Calu3 (cell line): ENCODE measurements at regions of chr18 and their contacts with region 1.

Region 1: GRCh38 chr18:9102508-9103375 is at the start of gene NDUFV2:
- DNase-seq: peak; percentile 99
- H3K4me3 Mint-ChIP-seq: peak within 1 kb of the TSS; percentile 79
- H3K27ac Mint-ChIP-seq: peak within 1 kb of the TSS; percentile 90
- H3K4me1 Mint-ChIP-seq: peaks cover 34% of the 10 kb centered on the region
- H3K27me3 Mint-ChIP-seq: no peaks in the 10 kb centered on the region
- CTCF ChIP-seq: no peak
- total RNA-seq, gene NDUFV2: 199 TPM in 2 replicates

Region 2: DNA sequence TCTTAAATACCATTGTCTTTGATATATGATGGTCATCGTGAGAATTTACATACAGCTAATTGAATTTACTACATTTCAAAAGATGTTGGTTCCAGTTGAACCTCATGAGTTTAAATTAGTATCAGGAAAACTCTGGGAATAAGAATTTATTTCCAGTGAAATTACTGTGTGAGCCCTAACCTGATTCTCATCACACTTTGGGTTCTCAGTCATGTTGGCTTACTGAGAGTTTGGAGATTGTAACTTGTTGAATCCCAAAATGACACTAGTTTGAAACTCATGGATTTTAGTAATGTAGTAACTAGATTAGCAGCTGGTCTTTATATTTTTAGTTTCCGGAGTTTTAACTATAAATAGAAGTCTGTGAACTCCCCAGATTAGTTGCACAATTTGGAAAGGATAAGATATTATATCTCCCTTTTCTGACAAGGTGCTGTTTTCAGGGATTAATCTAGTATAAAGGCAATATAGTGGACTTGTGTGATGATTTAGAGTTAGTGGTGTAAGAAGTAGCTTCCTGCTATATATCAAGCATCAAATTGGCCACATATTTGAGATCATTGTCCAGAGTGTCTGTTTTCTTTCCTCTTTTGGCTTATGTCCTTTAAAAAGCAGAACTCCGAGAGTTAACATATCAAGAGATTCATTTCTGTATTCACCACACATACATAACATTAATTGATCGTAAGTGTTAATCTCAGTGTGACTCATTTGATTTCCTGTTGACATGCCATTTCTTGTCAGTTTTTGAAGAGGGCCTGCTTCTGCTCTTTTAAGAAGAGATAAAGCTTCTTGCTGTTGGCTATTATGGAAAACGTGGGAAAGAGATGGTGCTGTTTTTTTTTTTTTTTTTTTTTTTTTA is 15.5 kb after region 1 on chr18:
- CTCF ChIA-PET with region 1: interaction called, 9 read pairs
- intact Hi-C with region 1: loop called (anchors 2 kb)
- DNase-seq: no peak
- H3K4me3 Mint-ChIP-seq: peak overlapping the region; percentile 46
- H3K27ac Mint-ChIP-seq: peak overlapping the region; percentile 72
- H3K4me1 Mint-ChIP-seq: peaks cover 40% of the 10 kb centered on the region
- H3K27me3 Mint-ChIP-seq: no peaks in the 10 kb centered on the region
- CTCF ChIP-seq: no peak

Region 3: GRCh38 chr18:9136315-9137155 is 33.8 kb after region 1 on chr18 and contains the start of gene ANKRD12:
- CTCF ChIA-PET with region 1: interaction called, 4 read pairs
- intact Hi-C with region 1: loop called (anchors 2 kb)
- DNase-seq: peak; percentile 97
- H3K4me3 Mint-ChIP-seq: peak within 1 kb of the TSS; percentile 94
- H3K27ac Mint-ChIP-seq: peak within 1 kb of the TSS; percentile 96
- H3K4me1 Mint-ChIP-seq: peaks cover 54% of the 10 kb centered on the region
- H3K27me3 Mint-ChIP-seq: no peaks in the 10 kb centered on the region
- CTCF ChIP-seq: no peak
- total RNA-seq, gene ANKRD12: 36.3 and 40.7 TPM in 2 replicates

Region 4: GRCh38 chr18:9243029-9243428 is 140.3 kb after region 1 on chr18:
- CTCF ChIA-PET with region 1: no interaction called
- intact Hi-C with region 1: no loop called
- DNase-seq: no peak
- H3K4me3 Mint-ChIP-seq: no peak overlapping the region
- H3K27ac Mint-ChIP-seq: no peak overlapping the region
- H3K4me1 Mint-ChIP-seq: no peaks in the 10 kb centered on the region
- H3K27me3 Mint-ChIP-seq: no peaks in the 10 kb centered on the region
- CTCF ChIP-seq: no peak